ENCODE measurements at regions of chr5 and their contacts with region 1.

Region 1: DNA sequence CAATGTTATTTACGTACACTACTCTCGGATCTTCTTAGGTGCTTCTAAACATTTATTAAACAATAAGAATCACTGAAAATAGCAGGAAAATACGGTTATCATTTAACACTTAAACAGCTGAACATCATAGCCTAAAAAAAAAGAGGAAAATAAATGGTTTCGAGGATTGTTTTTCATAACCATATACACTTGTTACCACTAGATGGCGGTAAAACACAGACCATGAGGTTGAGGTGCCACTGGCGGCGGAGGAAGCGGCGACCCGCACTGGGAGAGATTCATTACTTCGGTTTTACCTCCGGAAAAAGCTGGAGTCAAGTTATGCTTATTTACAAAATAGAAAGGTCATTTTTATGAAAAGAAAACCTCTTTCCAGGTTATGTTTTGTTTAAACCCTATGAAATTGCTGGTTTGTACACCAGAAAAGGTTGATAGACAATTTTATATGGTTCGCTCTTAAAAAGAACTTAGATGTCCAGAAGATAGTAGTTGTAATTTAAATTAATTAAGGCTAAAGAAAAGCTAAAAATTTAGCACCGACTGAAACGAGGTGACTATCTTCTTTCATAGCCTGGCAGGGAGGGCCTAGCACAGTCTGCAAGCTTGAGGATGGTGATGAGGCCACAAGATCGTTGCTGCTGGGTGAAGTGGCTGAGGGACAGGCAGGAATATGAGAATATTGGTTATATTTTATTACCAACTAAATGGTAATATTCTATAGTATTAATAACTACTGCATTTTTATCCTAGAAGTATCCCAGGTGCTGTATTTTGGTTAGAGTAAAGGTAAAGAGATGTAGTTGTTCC is 605.7 kb downstream of the RAB3C start:
- DNase-seq: peak; percentile 46
- ATAC-seq: peak; percentile 89
- H3K4me3 ChIP-seq: no peak overlapping the region
- H3K27ac ChIP-seq: no peak overlapping the region
- H3K4me1 ChIP-seq: no peaks in the 10 kb centered on the region
- H3K27me3 ChIP-seq: peaks cover 9% of the 10 kb centered on the region; the same call in 1 of the 2 replicates
- CTCF ChIP-seq: peak; percentile 53 to 79 (median 66); a peak in 5 of 6 replicates
- POLR2A ChIP-seq: no peak
- RAD21 ChIP-seq: peak; percentile 81

Region 2: GRCh38 chr5:59351076-59351794 is 162.6 kb after region 1 on chr5:
- CTCF ChIA-PET with region 1: interaction called, 10 read pairs
- POLR2A ChIA-PET with region 1: no interaction called
- RAD21 ChIA-PET with region 1: no interaction called
- intact Hi-C with region 1: no loop called
- DNase-seq: no peak
- ATAC-seq: no peak
- H3K4me3 ChIP-seq: no peak overlapping the region
- H3K27ac ChIP-seq: no peak overlapping the region
- H3K4me1 ChIP-seq: no peaks in the 10 kb centered on the region
- H3K27me3 ChIP-seq: peaks cover 5% of the 10 kb centered on the region; the same call in 1 of the 2 replicates
- CTCF ChIP-seq: no peak
- POLR2A ChIP-seq: no peak
- RAD21 ChIP-seq: no peak

Region 3: GRCh38 chr5:59380350-59380951 is 191.8 kb after region 1 on chr5:
- CTCF ChIA-PET with region 1: interaction called, 61 read pairs
- POLR2A ChIA-PET with region 1: interaction called, 10 read pairs
- RAD21 ChIA-PET with region 1: interaction called in 1 of 2 experiments, 3 read pairs
- intact Hi-C with region 1: loop called (anchors 1 kb)
- DNase-seq: peak; percentile 37
- ATAC-seq: peak; percentile 47; the same call in 1 of the 2 replicates
- H3K4me3 ChIP-seq: no peak overlapping the region
- H3K27ac ChIP-seq: no peak overlapping the region
- H3K4me1 ChIP-seq: no peaks in the 10 kb centered on the region
- H3K27me3 ChIP-seq: no peaks in the 10 kb centered on the region
- CTCF ChIP-seq: peak; percentile 25 to 54 (median 47); a peak in 4 of 6 replicates
- POLR2A ChIP-seq: no peak
- RAD21 ChIP-seq: peak; percentile 50

Region 4: GRCh38 chr5:59423021-59423420 is 234.4 kb after region 1 on chr5:
- CTCF ChIA-PET with region 1: no interaction called
- POLR2A ChIA-PET with region 1: no interaction called
- RAD21 ChIA-PET with region 1: no interaction called
- intact Hi-C with region 1: no loop called
- DNase-seq: no peak
- ATAC-seq: no peak
- H3K4me3 ChIP-seq: no peak overlapping the region
- H3K27ac ChIP-seq: no peak overlapping the region
- H3K4me1 ChIP-seq: no peaks in the 10 kb centered on the region
- H3K27me3 ChIP-seq: no peaks in the 10 kb centered on the region
- CTCF ChIP-seq: no peak
- POLR2A ChIP-seq: no peak
- RAD21 ChIP-seq: no peak

Region 5: DNA sequence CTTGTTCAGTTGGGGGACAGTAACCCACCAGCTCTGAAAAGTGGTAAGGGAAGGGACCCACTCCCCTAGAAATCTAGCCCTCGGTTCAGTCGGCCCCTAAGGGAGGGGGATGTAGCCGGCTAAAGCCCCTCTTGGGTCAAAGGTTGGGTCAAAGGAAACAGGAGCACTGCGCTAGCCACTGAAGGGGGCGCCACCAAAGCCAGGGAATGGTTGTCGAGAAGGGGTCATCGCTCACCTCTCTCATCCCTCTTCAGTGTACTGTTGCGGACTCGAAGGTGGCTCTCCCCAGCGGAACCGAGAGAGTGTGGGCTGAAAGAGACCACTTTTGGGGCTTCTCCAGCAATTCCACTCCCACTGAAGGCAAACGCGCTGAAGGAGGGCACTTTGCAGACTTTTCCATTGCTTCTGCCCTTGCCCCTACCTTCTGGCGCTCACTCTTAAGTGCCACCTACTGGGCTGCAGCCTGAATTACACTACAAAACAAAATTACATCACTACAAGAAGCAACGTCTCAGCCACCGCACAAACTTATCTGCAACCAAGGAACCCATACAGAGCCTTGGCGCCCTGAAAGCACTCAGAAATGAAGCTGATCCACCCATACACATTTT is 308.0 kb after region 1 on chr5:
- CTCF ChIA-PET with region 1: interaction called, 6 read pairs
- POLR2A ChIA-PET with region 1: no interaction called
- RAD21 ChIA-PET with region 1: no interaction called
- intact Hi-C with region 1: loop called (anchors 2 kb)
- DNase-seq: no peak
- ATAC-seq: peak; percentile 80
- H3K4me3 ChIP-seq: no peak overlapping the region
- H3K27ac ChIP-seq: no peak overlapping the region
- H3K4me1 ChIP-seq: no peaks in the 10 kb centered on the region
- H3K27me3 ChIP-seq: peaks cover 8% of the 10 kb centered on the region
- CTCF ChIP-seq: peak; percentile 32 to 70 (median 62); a peak in 5 of 6 replicates
- POLR2A ChIP-seq: no peak
- RAD21 ChIP-seq: peak; percentile 38; the same call in 1 of the 2 replicates

Region 6: DNA sequence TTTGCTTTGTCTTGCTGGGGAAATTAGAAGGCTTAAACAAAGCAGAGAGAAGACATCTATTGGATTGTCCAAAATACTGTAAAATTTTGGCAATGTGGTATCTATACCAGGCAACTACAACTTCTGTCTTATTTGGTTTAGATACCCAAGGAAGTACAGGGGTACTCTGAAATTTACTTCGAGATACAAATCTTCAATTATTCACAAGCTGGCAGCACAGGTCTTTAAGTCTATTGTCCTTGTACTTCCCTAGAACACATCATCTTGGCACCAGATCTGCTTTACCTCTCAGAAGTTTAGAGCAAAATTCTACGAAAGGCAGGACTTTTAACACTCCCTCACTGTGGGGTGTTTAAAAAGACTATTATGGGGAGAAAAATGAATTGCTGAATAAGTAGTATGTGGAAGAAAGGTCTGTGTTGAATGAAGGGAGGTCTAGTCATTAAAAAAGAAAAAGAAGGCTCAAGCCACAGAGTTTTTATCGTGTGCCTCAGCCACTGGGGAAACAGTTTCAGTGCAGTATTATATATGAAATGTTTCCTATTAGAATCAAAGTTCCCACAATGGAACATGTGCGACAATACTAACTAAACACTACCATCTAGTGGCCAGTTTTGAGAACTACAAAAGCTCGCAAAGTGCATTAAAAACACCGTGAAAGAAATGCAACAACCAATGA is 611.2 kb after region 1 on chr5:
- CTCF ChIA-PET with region 1: interaction called, 4 read pairs
- POLR2A ChIA-PET with region 1: no interaction called
- RAD21 ChIA-PET with region 1: no interaction called
- intact Hi-C with region 1: loop called (anchors 2 kb)
- DNase-seq: peak; percentile 37
- ATAC-seq: peak; percentile 74
- H3K4me3 ChIP-seq: no peak overlapping the region
- H3K27ac ChIP-seq: no peak overlapping the region
- H3K4me1 ChIP-seq: no peaks in the 10 kb centered on the region
- H3K27me3 ChIP-seq: no peaks in the 10 kb centered on the region; the same call in none of the 2 replicates
- CTCF ChIP-seq: peak; percentile 50 to 77 (median 54); a peak in 5 of 6 replicates
- POLR2A ChIP-seq: no peak
- RAD21 ChIP-seq: peak; percentile 72

Measured in HCT116 (cell line).